ENCODE measurements at regions of chr1 and their contacts with region 1.

Region 1: DNA sequence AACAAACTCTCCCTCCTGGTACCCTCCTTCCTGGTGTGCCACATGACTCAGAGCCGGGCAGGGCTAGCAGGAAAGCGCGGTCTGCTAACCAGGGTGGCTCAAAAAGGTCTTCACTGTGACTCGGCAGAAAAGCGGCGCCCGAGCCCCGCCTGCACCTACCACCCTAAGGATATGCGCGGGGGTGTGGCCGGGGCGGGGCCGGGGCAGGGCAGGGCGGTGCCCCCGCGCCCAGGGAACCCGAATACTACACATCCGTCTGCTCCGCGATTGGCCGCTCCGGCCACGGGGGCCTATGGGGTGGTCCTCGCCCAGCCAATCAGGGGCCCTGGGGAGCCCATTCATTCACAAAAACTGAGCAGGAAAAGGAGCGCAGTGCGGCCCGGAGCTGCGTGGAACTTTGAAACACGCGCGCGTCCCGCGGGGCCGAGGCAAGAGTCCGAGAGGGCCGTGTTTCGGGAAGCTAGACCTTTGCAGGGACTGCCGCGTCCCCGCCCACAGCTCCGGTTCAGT is 1.7 kb downstream of the LRP8 start:
- DNase-seq: peak; percentile 97
- H3K4me3 ChIP-seq: peak overlapping the region; percentile 91
- H3K27ac ChIP-seq: peak overlapping the region; percentile 83
- H3K4me1 ChIP-seq: peaks cover 23% of the 10 kb centered on the region
- CTCF ChIP-seq: no peak

Region 2: DNA sequence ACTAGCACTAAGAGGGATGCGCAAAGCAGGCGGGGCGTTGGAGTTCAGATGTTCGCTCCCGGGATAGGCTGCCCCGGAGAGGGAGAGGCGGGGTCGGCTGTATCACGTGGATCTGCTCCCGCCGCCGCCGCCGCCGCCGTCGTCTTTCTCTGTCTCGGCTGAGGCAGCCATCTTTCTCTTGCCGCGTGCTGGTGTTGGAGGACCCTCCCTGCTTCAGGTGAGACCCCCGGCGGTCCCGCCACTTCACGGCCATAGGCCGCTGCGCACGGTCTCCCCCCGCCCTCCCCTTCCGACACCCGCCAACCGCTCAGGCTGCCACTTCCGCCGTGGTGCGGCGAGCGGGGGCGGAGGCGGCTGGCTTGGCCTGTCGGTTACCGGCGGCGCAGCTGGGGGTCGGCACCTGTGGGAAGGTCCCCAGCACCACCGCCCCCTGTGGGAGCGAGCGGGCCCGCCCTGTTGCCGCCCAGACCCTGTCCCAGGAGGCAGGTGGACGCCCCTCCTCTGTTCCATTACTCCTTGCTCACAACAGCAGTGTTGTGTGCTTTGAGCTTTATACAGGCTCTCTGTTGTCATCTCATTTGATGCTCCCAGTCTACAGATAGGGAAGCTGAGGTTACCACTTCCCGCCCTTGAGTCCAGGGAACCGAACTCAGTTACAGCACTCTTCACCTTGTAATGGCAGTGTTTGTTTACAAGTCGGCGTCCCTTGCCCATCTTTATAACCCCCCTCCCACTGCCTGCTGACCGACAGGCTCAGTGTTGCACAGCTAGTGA is 1269.8 kb before region 1 on chr1 and contains the start of gene BTF3L4:
- CTCF ChIA-PET with region 1: no interaction called
- POLR2A ChIA-PET with region 1: no interaction called
- intact Hi-C with region 1: loop called (anchors 10 kb)
- DNase-seq: peak; percentile 95
- H3K4me3 ChIP-seq: peak within 1 kb of the TSS; percentile 96
- H3K27ac ChIP-seq: peak within 1 kb of the TSS; percentile 80
- H3K4me1 ChIP-seq: peaks cover 38% of the 10 kb centered on the region
- CTCF ChIP-seq: peak; percentile 26; the same call in 1 of the 2 replicates
- total RNA-seq, gene BTF3L4: 25.5 and 27.4 TPM in 2 replicates

Region 3: GRCh38 chr1:53259932-53260331 is 66.2 kb before region 1 on chr1:
- CTCF ChIA-PET with region 1: no interaction called
- POLR2A ChIA-PET with region 1: no interaction called
- intact Hi-C with region 1: no loop called
- DNase-seq: peak; percentile 57
- H3K4me3 ChIP-seq: no peak overlapping the region
- H3K27ac ChIP-seq: peak overlapping the region; percentile 54
- H3K4me1 ChIP-seq: peaks cover 17% of the 10 kb centered on the region
- CTCF ChIP-seq: no peak

Region 4: GRCh38 chr1:53278201-53278725 is 47.9 kb before region 1 on chr1:
- CTCF ChIA-PET with region 1: no interaction called
- POLR2A ChIA-PET with region 1: interaction called, 6 read pairs
- intact Hi-C with region 1: loop called (anchors 5 kb)
- DNase-seq: peak; percentile 57
- H3K4me3 ChIP-seq: no peak overlapping the region
- H3K27ac ChIP-seq: no peak overlapping the region
- H3K4me1 ChIP-seq: no peaks in the 10 kb centered on the region
- CTCF ChIP-seq: peak; percentile 94

Region 5: DNA sequence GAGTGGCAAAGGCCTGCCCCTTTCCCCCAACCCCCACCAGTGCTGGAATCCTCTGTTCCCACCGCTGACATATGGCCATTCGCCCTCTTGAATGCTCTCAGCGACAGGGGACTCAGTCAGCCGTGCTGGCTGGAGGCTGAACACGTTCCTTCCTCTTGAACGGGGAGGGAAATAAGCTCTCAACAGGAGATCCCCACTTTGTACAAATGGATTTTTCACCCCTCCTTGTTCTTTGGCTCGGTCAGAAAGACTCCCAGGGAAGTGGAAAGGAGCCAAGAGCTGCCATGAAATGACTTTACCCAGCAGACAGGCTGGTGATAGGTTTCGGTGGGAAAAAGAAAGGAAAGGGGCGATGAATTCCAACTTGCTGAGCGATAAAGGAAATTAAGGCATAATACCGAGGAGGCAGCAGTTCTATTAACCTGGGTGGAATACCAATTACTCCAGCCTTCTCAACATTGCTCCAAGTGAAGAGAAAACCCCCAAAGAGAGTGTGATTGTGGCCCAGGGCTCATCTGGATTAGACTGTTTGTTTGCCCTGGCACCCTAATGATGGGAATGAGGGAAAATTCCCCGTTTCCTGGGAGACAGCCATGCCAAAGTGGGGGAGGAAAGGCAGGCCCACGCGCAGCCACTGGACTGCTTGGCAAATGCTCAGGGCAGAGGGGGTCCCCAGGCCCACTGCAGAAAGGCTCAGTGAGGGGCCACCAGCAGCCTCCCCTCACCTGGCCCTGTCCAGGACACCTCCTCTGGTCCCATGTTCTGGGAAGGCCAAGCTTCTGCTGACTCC is 22.2 kb before region 1 on chr1:
- CTCF ChIA-PET with region 1: no interaction called
- POLR2A ChIA-PET with region 1: no interaction called
- intact Hi-C with region 1: no loop called
- DNase-seq: no peak
- H3K4me3 ChIP-seq: no peak overlapping the region
- H3K27ac ChIP-seq: no peak overlapping the region
- H3K4me1 ChIP-seq: no peaks in the 10 kb centered on the region
- CTCF ChIP-seq: no peak

Region 6: DNA sequence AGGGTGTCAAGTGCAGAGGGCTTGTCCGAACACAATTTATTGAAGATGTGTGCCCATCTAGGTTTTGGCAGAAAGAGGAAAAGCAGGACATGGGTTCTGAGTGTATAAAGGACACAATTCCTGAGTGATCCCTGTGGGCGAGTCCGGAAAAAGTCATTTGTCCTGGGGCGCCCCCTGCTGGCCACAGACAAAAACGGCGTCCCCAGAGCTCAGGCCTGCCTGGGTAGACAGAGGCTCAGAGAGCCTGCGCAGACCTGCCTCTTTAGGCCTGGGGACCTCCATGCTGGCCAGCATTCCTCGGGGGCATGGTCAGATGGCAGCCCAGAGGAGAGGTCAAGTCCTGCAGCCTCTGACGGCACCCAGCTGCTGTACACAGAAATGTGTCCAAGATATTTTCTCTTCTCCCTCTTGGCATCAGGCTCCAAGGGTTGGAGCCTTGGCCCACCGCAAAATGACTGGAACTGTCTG is 67.2 kb after region 1 on chr1:
- CTCF ChIA-PET with region 1: no interaction called
- POLR2A ChIA-PET with region 1: no interaction called
- intact Hi-C with region 1: loop called (anchors 1 kb)
- DNase-seq: peak; percentile 69
- H3K4me3 ChIP-seq: no peak overlapping the region
- H3K27ac ChIP-seq: no peak overlapping the region
- H3K4me1 ChIP-seq: peaks cover 16% of the 10 kb centered on the region
- CTCF ChIP-seq: peak; percentile 94

Region 7: DNA sequence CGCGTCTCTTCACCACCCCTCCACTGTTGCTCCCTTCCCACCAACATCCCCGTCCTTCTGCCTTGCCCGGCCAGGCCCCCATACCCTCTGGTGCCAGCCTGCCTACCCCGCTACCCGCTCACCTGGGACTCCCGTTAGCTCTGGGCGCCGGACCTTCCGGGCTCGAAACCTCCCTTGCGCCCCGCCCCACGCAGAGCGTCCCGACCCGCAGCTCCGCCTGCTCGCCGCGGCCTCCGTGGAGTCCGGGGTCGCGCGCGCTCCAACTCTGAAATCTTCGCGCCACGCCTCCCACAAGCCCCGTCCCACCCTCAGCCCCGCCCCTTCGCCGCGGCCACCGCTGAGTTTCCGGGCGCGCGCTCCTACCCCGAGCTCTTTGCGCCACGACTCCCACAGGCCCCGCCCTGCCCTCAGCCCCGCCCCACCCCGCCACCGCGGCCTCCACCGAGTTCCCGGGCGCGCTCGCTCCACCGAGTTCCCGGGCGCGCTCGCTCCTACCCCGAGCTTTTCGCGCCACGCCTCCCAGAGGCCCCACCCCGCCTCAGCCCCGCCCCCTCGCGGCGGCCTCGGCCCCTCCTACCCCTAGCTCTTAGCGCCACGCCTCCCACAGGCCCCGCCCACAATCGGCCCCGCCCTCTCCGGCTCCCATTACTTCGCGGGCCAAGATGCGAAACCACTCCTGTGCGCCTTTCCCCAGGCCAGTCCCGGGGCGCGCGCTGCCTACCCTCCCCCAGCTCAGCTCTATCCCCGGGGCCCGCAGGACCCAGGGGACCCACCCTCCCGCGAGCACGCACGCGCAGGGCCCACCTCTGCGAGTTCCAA is 619.5 kb after region 1 on chr1 and contains the start of gene IFT25:
- CTCF ChIA-PET with region 1: no interaction called
- POLR2A ChIA-PET with region 1: no interaction called
- intact Hi-C with region 1: loop called (anchors 2 kb)
- DNase-seq: peak; percentile 92
- H3K4me3 ChIP-seq: peak within 1 kb of the TSS; percentile 71
- H3K27ac ChIP-seq: peak within 1 kb of the TSS; percentile 50
- H3K4me1 ChIP-seq: peaks cover 18% of the 10 kb centered on the region
- CTCF ChIP-seq: no peak
- total RNA-seq, gene IFT25: 57.0 and 61.0 TPM in 2 replicates

Measured in OCI-LY7 (cell line).